ENCODE measurements at regions of chr13 and their contacts with region 1.

Region 1: GRCh38 chr13:99269627-99270241 is 11.6 kb upstream of the GPR18 start:
- DNase-seq: peak in 5 of 14 experiments; percentile 32 to 86 (median 79)
- ATAC-seq: peak; percentile 80
- H3K4me3 ChIP-seq: no peak overlapping the region
- H3K4me3 Mint-ChIP-seq: no peak overlapping the region
- H3K27ac ChIP-seq: no peak overlapping the region
- H3K27ac Mint-ChIP-seq: peak overlapping the region; percentile 87
- H3K4me1 ChIP-seq: peaks cover 32% of the 10 kb centered on the region
- H3K4me1 Mint-ChIP-seq: peaks cover 78% of the 10 kb centered on the region
- H3K27me3 ChIP-seq: no peaks in the 10 kb centered on the region
- H3K27me3 Mint-ChIP-seq: no peaks in the 10 kb centered on the region
- CTCF ChIP-seq: peak; percentile 94

Region 2: GRCh38 chr13:99093997-99094396 is 175.7 kb before region 1 on chr13:
- CTCF ChIA-PET with region 1: no interaction called
- POLR2A ChIA-PET with region 1: no interaction called
- intact Hi-C with region 1: loop called in 1 of 2 experiments (anchors 5 kb)
- DNase-seq: no peak
- ATAC-seq: no peak
- H3K4me3 ChIP-seq: no peak overlapping the region
- H3K4me3 Mint-ChIP-seq: no peak overlapping the region
- H3K27ac ChIP-seq: no peak overlapping the region
- H3K27ac Mint-ChIP-seq: no peak overlapping the region
- H3K4me1 ChIP-seq: no peaks in the 10 kb centered on the region
- H3K4me1 Mint-ChIP-seq: peaks cover 2% of the 10 kb centered on the region
- H3K27me3 ChIP-seq: no peaks in the 10 kb centered on the region
- H3K27me3 Mint-ChIP-seq: no peaks in the 10 kb centered on the region
- CTCF ChIP-seq: no peak

Region 3: DNA sequence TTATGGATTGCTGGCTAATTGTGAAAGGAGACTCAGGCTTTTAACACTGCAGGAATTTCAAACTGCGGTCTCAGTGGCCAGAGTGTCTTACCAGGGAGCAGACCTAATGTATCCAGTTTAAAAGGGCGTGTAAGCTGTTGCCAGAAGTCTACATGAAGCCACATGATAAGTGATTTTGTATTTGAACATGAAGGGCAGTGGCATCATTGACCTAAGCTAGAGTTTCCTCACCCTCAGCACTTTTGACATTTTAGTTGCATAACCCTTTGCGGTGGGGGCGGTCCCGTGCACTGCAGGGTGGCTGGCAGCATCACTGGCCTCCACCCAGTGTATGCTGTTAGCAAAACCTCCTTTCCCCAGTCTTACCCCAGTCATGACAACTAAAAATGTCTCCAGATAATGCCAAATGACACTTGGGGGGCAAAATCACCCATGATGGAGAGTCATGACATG is 12.1 kb after region 1 on chr13:
- CTCF ChIA-PET with region 1: interaction called, 13 read pairs
- POLR2A ChIA-PET with region 1: interaction called, 17 read pairs
- intact Hi-C with region 1: no loop called
- DNase-seq: peak in 13 of 14 experiments; percentile 35 to 88 (median 56)
- ATAC-seq: peak; percentile 71
- H3K4me3 ChIP-seq: no peak overlapping the region
- H3K4me3 Mint-ChIP-seq: peak overlapping the region; percentile 55
- H3K27ac ChIP-seq: peak overlapping the region; percentile 80 to 90
- H3K27ac Mint-ChIP-seq: peak overlapping the region; percentile 100
- H3K4me1 ChIP-seq: peaks cover 71% of the 10 kb centered on the region
- H3K4me1 Mint-ChIP-seq: peaks cover 97% of the 10 kb centered on the region
- H3K27me3 ChIP-seq: no peaks in the 10 kb centered on the region
- H3K27me3 Mint-ChIP-seq: no peaks in the 10 kb centered on the region
- CTCF ChIP-seq: no peak

Region 4: GRCh38 chr13:99307648-99308339 is 38.1 kb after region 1 on chr13:
- CTCF ChIA-PET with region 1: interaction called, 44 read pairs
- POLR2A ChIA-PET with region 1: interaction called, 42 read pairs
- intact Hi-C with region 1: loop called in 1 of 2 experiments (anchors 5 kb)
- DNase-seq: peak in 10 of 14 experiments; percentile 36 to 79 (median 46)
- ATAC-seq: peak; percentile 35
- H3K4me3 ChIP-seq: peak overlapping the region; percentile 83
- H3K4me3 Mint-ChIP-seq: peak overlapping the region; percentile 97
- H3K27ac ChIP-seq: peak overlapping the region; percentile 46 to 80
- H3K27ac Mint-ChIP-seq: peak overlapping the region; percentile 89
- H3K4me1 ChIP-seq: peaks cover 59% of the 10 kb centered on the region
- H3K4me1 Mint-ChIP-seq: peaks cover 75% of the 10 kb centered on the region
- H3K27me3 ChIP-seq: no peaks in the 10 kb centered on the region
- H3K27me3 Mint-ChIP-seq: no peaks in the 10 kb centered on the region
- CTCF ChIP-seq: no peak

Region 5: DNA sequence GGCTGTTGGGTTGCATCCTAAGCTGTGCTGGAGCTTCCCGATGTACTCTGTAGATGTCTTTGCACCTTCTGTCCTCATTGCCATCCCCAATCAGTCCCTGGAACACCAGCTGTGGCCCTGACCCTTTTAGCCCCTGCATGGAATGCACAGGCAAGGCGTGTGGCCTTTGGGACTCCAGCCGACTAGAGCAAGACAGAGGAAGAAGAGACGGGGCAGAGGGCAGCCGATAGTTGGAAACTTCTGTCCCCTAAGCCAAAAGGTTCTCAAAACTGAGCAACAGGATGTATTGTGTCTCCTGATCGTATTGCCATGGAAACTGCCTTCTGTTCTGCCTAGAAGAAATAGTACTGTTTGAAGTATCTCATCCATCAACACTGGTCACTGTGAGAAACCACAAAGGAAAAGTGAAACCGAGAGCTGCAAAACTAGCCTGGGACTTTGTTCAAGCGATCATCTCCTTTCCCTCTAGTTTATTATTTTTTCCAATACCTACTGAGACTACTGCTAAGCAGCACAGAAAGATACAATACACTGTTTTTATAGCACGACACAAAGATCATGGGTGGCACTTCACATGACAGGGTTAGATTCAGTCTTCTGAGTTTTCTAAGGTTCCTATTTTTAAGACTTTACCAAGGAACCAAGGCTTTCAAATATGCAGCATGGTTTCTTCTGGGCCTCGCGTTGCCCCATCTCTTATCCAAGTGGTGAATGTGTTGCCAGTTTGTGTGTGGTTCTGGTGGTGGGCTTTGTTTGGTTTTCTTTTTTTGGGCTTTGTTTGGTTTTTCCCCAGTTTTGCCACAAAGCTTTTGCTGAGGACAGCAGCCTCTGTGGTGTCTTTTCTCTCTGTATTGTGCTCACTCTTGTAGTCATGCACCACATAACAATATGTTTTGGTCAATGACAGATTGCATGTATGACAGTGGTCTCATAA is 86.7 kb after region 1 on chr13:
- CTCF ChIA-PET with region 1: interaction called, 19 read pairs
- POLR2A ChIA-PET with region 1: interaction called, 18 read pairs
- intact Hi-C with region 1: no loop called
- DNase-seq: peak in 12 of 14 experiments; percentile 42 to 97 (median 56)
- ATAC-seq: peak; percentile 54
- H3K4me3 ChIP-seq: peak overlapping the region; percentile 19
- H3K4me3 Mint-ChIP-seq: peak overlapping the region; percentile 49
- H3K27ac ChIP-seq: peak overlapping the region; percentile 93 to 97
- H3K27ac Mint-ChIP-seq: peak overlapping the region; percentile 97
- H3K4me1 ChIP-seq: peaks cover 95% of the 10 kb centered on the region
- H3K4me1 Mint-ChIP-seq: peaks cover 100% of the 10 kb centered on the region
- H3K27me3 ChIP-seq: no peaks in the 10 kb centered on the region
- H3K27me3 Mint-ChIP-seq: no peaks in the 10 kb centered on the region
- CTCF ChIP-seq: no peak

Region 6: GRCh38 chr13:99386911-99387788 is 117.4 kb after region 1 on chr13:
- CTCF ChIA-PET with region 1: interaction called, 34 read pairs
- POLR2A ChIA-PET with region 1: interaction called, 35 read pairs
- intact Hi-C with region 1: loop called (anchors 1 to 2 kb)
- DNase-seq: peak; percentile 81 to 94 (median 88)
- ATAC-seq: peak; percentile 22
- H3K4me3 ChIP-seq: no peak overlapping the region
- H3K4me3 Mint-ChIP-seq: peak overlapping the region; percentile 21
- H3K27ac ChIP-seq: peak overlapping the region; percentile 31 to 57
- H3K27ac Mint-ChIP-seq: peak overlapping the region; percentile 88
- H3K4me1 ChIP-seq: peaks cover 67% of the 10 kb centered on the region
- H3K4me1 Mint-ChIP-seq: peaks cover 61% of the 10 kb centered on the region
- H3K27me3 ChIP-seq: no peaks in the 10 kb centered on the region
- H3K27me3 Mint-ChIP-seq: no peaks in the 10 kb centered on the region
- CTCF ChIP-seq: peak; percentile 88

Region 7: DNA sequence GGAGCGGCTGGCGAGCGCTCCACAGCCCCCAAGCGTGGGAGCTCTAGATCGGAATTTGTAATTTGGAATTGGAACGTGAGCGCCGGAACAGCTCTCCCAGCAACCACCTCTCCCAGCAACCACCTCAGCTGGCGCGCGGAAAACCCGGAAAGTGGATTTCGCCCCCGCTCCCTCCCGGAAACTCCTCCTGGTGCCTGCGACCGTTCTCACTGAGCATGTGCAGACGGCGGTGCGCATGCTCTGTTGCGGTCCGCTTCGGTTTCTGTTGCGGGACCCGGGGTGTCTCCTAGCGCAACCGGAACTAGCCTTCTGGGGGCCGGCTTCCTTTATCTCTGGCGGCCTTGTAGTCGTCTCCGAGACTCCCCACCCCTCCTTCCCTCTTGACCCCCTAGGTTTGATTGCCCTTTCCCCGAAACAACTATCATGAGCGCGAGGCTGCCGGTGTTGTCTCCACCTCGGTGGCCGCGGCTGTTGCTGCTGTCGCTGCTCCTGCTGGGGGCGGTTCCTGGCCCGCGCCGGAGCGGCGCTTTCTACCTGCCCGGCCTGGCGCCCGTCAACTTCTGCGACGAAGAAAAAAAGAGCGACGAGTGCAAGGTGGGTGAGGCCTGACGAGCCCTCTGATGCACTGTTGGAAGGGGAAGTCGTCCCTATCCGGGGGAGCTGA is 231.6 kb after region 1 on chr13 and contains the start of gene TM9SF2:
- CTCF ChIA-PET with region 1: interaction called, 4 read pairs
- POLR2A ChIA-PET with region 1: no interaction called
- intact Hi-C with region 1: loop called (anchors 5 kb)
- DNase-seq: peak; percentile 93 to 99 (median 96)
- ATAC-seq: peak; percentile 60
- H3K4me3 ChIP-seq: peak within 1 kb of the TSS; percentile 85
- H3K4me3 Mint-ChIP-seq: peak within 1 kb of the TSS; percentile 96
- H3K27ac ChIP-seq: peak within 1 kb of the TSS; percentile 85 to 92
- H3K27ac Mint-ChIP-seq: peak within 1 kb of the TSS; percentile 98
- H3K4me1 ChIP-seq: peaks cover 56% of the 10 kb centered on the region
- H3K4me1 Mint-ChIP-seq: peaks cover 90% of the 10 kb centered on the region
- H3K27me3 ChIP-seq: no peaks in the 10 kb centered on the region
- H3K27me3 Mint-ChIP-seq: no peaks in the 10 kb centered on the region
- CTCF ChIP-seq: no peak
- total RNA-seq, gene TM9SF2: 37.2 to 38.2 TPM

Measured in CD4-positive, alpha-beta T cell (primary cell).